Activated T-helper 1 cell treated with anti-CD3 and anti-CD28 coated beads, Interleukin-12 subunit alpha, Interleukin-12 subunit beta, Interleukin-2, Interleukin-4 antibody, amounts not matched to agents 30 ng/mL and 10 ng/mL and 1 ng/mL, durations not matched to agents 14 hours and 24 hours and 36 hours (primary cell): ENCODE measurements at regions of chr17 and their contacts with region 1.

Region 1: DNA sequence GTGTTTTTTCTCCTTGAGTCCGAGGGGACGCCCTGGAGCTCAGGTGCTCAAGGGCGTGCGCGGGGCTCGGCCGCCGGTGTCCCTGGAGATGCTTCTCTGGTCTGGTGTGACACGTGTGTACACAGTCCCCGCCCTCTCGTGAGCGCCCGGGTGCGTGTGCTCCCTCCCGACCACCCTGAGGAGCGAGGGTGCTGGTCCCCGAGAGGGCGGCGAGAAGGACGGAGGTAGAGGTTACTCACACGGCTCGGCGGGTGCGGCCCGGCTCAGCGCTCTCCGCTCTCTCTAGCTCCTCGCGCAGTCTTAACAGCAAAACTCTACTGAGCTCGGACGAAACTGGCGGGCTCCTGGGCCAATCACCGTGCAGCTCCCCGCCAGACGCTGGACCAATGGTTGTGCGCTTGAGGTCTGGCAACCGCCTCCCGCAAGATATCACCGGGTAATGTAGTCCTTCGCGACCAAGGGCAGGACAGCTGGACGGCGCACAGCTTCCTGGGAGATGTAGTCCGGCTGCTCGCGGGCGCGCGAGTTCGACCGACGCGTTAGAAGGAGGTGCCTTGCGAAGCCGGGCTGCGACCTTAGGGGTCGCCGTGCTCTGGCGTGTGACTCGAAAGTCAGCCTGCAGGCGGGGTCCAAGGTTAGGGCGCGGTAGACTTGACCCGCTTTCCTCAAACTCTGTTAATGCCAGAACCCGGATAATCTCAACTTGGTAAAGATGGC is at the start of gene SLC25A19:
- DNase-seq: peak; percentile 97
- H3K4me3 Mint-ChIP-seq: peak within 1 kb of the TSS; percentile 97
- H3K27ac Mint-ChIP-seq: peak within 1 kb of the TSS; percentile 100
- H3K4me1 Mint-ChIP-seq: peaks cover 19% of the 10 kb centered on the region
- H3K27me3 Mint-ChIP-seq: no peaks in the 10 kb centered on the region
- total RNA-seq, gene SLC25A19: 119 and 126 TPM in 2 replicates

Region 2: DNA sequence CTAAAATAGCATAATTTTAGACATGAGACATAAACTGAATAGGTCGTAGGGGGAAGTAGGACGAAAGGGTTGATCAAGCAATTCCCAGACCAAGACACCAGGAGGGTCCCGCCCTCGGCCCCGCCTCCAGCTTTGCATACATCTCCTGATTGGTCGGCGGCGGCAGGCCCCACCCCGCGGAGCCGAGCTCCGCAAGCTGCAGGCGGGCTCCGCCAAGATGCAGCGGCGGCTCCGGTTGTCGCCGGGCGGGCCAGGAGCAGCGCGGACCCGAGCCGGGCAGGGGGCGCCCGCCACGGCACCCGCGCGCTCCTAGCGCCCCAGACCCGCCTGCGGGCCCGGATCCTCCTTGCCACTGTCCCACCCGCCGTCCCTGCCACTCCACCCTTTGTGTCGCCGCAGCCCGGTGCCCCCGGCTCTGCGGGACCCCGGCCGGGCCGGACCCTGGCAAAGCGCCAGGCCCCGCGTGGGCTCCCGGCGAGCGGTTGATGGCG is 301.8 kb before region 1 on chr17 and contains the start of gene CDR2L:
- intact Hi-C with region 1: loop called (anchors 1 kb)
- DNase-seq: peak; percentile 89
- H3K4me3 Mint-ChIP-seq: peak within 1 kb of the TSS; percentile 83
- H3K27ac Mint-ChIP-seq: no peak within 1 kb of the TSS
- H3K4me1 Mint-ChIP-seq: peaks cover 7% of the 10 kb centered on the region
- H3K27me3 Mint-ChIP-seq: peaks cover 54% of the 10 kb centered on the region
- total RNA-seq, gene CDR2L: 1.1 and 1.3 TPM in 2 replicates

Region 3: DNA sequence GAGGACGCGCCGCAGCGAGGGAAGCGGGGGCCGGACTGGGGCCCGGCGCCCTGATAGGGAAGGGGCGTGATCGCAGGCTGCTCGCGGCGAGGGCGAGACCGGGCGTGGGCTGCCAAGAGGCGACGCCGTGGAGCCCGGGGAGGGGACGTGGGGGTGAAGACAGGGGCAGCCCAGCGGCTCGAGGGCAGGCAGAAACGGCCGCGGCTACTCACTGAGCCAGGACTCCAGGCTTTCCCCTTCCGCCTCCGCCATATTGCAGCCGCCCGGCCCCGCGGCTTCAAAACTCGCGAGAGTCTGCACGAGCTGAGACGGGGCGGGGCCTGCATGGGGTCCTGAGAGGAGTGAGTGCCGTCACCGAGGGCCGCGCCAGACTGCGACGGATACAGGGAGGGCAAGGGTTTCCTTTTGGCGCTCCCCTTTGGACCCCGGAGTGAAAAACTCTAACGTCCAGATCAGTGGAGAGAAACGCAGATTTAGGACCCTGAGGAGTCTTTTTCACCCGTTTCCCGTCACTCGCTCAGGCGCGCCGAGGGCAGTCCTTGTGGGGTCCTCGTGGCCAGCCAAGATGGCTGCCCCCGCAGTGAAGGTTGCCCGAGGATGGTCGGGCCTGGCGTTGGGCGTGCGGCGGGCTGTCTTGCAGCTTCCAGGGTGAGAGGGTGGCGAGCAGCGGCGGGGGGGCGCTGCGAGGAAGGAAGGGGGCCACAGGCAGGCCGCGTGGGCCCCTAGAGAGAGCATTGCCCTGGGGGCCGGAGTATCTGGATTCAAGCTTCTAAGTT is 27.7 kb before region 1 on chr17 and contains the starts of genes GGA3 and MRPS7:
- intact Hi-C with region 1: loop called (anchors 1 kb)
- DNase-seq: peak; percentile 94
- H3K4me3 Mint-ChIP-seq: peak within 1 kb of the TSS; percentile 96
- H3K27ac Mint-ChIP-seq: peak within 1 kb of the TSS; percentile 97
- H3K4me1 Mint-ChIP-seq: peaks cover 49% of the 10 kb centered on the region
- H3K27me3 Mint-ChIP-seq: no peaks in the 10 kb centered on the region
- total RNA-seq, gene GGA3: 93.4 and 94.3 TPM in 2 replicates
- total RNA-seq, gene MRPS7: 126 and 130 TPM in 2 replicates

Region 4: DNA sequence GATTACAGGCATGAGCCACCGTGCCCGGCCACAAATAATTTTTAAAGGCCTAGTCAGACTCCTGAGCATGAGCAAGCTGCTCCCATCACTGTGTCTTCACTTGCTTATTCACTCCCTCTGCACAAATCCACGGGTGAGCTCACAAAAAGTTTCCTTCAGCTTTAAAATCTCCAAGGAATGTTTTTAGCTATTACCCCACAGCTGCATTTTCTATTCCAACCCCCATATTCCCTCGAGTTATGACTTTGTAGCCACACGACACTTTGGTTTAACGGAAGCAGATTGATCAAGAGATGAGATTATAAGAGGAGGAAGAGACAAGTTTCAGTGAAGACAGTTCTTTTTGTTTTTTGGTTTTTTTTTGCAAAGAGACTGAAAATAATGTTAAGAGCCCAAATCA is 49.1 kb after region 1 on chr17:
- intact Hi-C with region 1: loop called (anchors 1 kb)
- DNase-seq: no peak
- H3K4me3 Mint-ChIP-seq: peak overlapping the region; percentile 63
- H3K27ac Mint-ChIP-seq: peak overlapping the region; percentile 90
- H3K4me1 Mint-ChIP-seq: peaks cover 74% of the 10 kb centered on the region
- H3K27me3 Mint-ChIP-seq: no peaks in the 10 kb centered on the region

Region 5: GRCh38 chr17:75456417-75457046 is 167.3 kb after region 1 on chr17 and contains the start of gene TMEM94:
- intact Hi-C with region 1: loop called (anchors 2 kb)
- DNase-seq: peak; percentile 89
- H3K4me3 Mint-ChIP-seq: peak within 1 kb of the TSS; percentile 92
- H3K27ac Mint-ChIP-seq: peak within 1 kb of the TSS; percentile 84
- H3K4me1 Mint-ChIP-seq: peaks cover 35% of the 10 kb centered on the region
- H3K27me3 Mint-ChIP-seq: no peaks in the 10 kb centered on the region
- total RNA-seq, gene TMEM94: 67.0 and 70.4 TPM in 2 replicates

Region 6: DNA sequence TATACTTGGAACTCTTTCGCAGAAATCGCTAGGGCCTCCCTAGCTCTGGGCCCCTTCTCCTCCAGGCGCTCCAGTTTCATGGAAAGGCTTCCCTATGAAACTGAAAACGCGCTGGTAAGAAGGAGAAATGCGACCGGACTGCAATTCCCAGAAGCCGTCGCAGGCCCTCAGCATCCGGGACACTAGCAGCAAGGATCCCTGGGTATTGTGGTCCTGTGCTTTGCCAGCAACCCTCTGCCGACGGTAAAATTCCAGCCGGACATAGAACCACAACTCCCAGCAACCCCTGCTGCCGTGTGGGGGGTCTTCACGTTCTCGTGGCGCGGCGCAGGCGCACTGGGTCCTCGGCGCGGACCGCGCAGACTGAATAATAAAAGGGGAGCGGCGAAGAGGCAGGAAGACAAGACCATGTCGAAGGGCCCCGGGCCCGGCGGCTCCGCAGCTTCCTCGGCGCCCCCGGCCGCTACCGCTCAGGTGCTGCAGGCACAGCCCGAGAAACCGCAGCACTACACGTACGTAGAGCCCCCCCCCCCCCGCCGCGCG is 495.3 kb after region 1 on chr17 and contains the start of gene UNK:
- intact Hi-C with region 1: loop called (anchors 1 kb)
- DNase-seq: peak; percentile 94
- H3K4me3 Mint-ChIP-seq: peak within 1 kb of the TSS; percentile 92
- H3K27ac Mint-ChIP-seq: peak within 1 kb of the TSS; percentile 99
- H3K4me1 Mint-ChIP-seq: peaks cover 47% of the 10 kb centered on the region
- H3K27me3 Mint-ChIP-seq: peaks cover 2% of the 10 kb centered on the region
- total RNA-seq, gene UNK: 26.0 and 26.9 TPM in 2 replicates